Right cardiac atrium (tissue), 5 donors: ENCODE measurements at regions of chr17 and their contacts with region 1.

Region 1: GRCh38 chr17:69567130-69567529 is 152.6 kb downstream of the MAP2K6 start:
- DNase-seq: no peak
- ATAC-seq: no peak
- H3K4me3 ChIP-seq: no peak overlapping the region
- H3K27ac ChIP-seq: no peak overlapping the region
- H3K4me1 ChIP-seq: no peaks in the 10 kb centered on the region
- H3K27me3 ChIP-seq: no peaks in the 10 kb centered on the region

Region 2: DNA sequence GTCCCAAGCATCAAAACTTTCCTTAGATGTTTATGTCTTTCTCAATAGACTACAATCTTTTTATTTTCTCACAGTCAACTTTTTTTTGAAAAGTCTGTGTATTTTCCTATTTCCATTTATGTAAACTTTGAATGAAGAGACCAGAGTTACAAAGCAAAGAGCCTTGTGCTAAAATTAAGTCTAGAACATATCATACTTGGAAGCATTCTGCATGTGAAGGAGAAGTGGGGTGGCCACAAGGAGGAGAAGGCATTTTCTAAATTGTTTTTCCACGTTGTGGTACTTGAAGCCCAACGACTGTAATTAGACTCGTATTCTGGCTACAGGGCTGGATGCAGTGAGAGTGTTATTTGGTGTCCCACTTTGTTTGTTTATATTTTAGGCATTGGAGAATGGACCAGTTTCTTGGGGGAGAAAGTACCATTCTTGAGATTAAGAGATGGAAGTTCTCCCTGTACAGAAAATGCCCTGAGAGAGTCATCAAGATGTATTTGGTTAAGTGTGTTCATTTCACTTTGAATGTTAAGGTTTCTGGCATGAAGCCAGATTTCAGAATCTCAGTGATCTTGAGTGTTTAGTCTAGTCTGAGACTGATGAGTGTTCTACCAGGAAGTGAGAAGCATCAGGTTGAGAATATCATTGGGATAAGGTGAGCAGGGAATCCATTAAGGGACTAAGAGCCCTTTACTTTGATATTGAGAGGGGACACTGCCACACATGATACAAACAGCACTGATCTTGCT is 81.1 kb before region 1 on chr17:
- intact Hi-C with region 1: no loop called
- DNase-seq: no peak
- ATAC-seq: peak; percentile 41 to 57
- H3K4me3 ChIP-seq: no peak overlapping the region
- H3K27ac ChIP-seq: no peak overlapping the region
- H3K4me1 ChIP-seq: no peaks in the 10 kb centered on the region
- H3K27me3 ChIP-seq: no peaks in the 10 kb centered on the region

Region 3: GRCh38 chr17:70144260-70144846 is 577.2 kb after region 1 on chr17:
- intact Hi-C with region 1: loop called in 1 of 4 experiments (anchors 10 kb)
- DNase-seq: no peak
- ATAC-seq: no peak
- H3K4me3 ChIP-seq: no peak overlapping the region
- H3K27ac ChIP-seq: no peak overlapping the region
- H3K4me1 ChIP-seq: no peaks in the 10 kb centered on the region
- H3K27me3 ChIP-seq: no peaks in the 10 kb centered on the region

Region 4: DNA sequence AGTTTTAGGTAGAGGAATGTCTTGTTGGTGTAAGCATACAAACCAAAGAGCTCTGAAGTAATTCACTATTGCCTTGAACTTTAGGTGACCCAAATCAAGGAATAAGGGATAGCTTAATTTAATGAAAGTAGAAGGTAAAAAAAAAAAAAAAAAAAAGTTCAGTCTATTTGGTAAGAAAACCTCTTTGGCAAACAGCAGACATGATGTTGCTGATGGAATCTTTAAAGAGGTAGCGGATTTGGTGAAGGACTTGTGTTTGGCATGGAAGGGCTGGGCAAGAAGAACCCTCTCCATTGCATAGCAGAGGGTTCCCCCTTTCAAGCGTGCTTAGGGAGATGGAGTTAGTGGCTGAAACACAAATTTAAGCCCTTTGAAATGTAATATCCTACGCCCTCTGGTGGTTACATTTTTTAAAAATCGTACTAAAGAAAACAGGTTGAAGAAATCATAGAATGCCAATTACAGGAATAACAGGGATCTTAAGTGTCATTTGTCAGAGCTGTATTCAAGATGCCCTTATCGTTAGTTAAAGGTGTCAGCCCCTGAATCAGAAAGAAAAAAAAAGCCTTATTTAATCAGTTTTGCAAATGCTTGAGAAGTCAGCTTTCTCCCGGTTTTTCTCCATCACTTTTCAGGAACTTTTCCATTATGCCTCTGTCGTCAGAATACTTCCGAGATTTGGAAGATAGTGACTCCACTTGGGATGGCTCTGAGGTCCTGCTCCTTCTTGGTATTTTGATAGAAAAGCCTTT is 985.3 kb after region 1 on chr17:
- intact Hi-C with region 1: loop called in 1 of 4 experiments (anchors 5 kb)
- DNase-seq: no peak
- ATAC-seq: peak; percentile 56 to 69
- H3K4me3 ChIP-seq: no peak overlapping the region
- H3K27ac ChIP-seq: no peak overlapping the region
- H3K4me1 ChIP-seq: no peaks in the 10 kb centered on the region
- H3K27me3 ChIP-seq: no peaks in the 10 kb centered on the region

Region 5: DNA sequence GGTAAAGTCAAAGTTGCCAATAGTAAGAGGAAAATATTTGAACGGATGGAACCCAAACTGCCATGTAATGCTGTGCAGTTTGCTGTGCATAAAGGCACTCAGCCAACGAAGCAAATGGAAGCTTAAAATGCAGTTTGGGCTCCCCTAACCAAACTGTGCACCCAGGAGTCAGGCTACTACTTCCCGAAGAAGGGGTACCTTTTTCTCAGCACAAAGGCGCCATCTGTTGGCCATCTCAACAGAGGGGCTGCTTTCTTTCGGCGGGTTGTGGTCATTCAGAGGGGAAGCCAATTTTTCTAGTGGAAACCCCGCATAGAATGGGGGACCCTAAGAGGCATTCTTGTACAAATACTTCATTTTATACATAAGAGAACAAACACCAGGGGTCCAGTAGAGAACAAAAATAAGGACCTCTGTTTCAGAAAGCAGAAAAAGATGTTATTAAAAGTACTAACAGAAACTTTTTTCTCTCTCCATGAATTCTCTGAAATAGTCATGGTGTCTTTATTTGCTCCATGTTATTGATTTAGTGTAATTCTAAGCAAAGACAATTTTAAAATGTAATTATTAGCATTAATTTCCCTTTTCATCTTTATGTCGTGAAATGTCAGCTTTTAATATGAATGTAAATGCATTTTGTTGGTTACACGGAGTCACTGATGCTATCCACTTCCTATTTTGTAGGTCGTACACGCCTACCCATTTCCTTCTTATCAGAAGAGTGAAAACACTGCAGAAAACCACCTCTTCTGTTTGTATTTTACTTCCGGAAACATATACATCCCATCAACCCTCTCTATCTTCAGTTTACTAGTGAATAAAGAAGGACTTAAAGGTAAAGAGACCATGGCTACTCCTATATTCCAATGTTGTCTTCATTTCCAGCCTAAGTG is 1055.5 kb after region 1 on chr17:
- intact Hi-C with region 1: loop called in 3 of 4 experiments (anchors 10 kb)
- DNase-seq: peak; percentile 21 to 67 (median 49)
- ATAC-seq: peak in 1 of 2 donors; percentile 55
- H3K4me3 ChIP-seq: no peak overlapping the region
- H3K27ac ChIP-seq: no peak overlapping the region
- H3K4me1 ChIP-seq: no peaks in the 10 kb centered on the region
- H3K27me3 ChIP-seq: no peaks in the 10 kb centered on the region